ENCODE measurements at regions of chr2 and their contacts with region 1.

Region 1: DNA sequence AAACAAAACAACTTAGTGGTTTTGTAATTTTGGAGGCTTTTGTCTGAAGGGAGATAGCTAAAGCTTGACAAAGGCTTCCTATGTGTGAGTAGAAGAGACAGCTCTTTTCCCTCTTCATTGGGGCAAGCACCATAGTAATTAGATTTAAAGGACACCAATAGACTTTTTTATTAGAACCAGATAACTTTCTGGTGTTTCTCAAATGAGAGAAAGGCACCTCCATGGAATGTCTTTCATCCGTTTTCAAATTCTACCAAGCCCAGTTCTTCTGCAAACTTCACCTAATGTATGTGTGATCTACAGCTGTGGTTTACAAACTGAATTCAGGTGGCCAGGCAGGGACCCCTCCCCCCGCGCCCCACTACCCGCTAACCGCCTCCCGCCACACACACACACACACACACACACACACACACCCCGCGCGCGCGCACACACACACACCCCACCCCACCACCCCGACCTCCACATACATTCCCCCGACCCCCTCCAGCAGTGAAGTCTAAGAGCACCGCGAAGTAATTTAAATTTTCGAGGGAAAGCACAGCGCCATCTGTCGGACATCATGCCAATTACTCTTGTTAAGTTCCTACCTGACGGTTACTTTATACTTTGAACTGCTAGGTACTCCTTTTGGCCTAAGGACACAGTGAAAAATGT is 31.6 kb upstream of the PPP1R1C start:
- DNase-seq: peak in 1 of 2 donors; percentile 28
- ATAC-seq: peak in 1 of 2 donors; percentile 81
- H3K4me3 ChIP-seq: peak overlapping the region; percentile 37 to 51 (median 47)
- H3K27ac ChIP-seq: no peak overlapping the region
- H3K4me1 ChIP-seq: peaks cover 0 to 5% of the 10 kb centered on the region in 2 donors
- H3K27me3 ChIP-seq: no peaks in the 10 kb centered on the region
- CTCF ChIP-seq: peak; percentile 20 to 74 (median 43)
- POLR2A ChIP-seq: no peak

Region 2: DNA sequence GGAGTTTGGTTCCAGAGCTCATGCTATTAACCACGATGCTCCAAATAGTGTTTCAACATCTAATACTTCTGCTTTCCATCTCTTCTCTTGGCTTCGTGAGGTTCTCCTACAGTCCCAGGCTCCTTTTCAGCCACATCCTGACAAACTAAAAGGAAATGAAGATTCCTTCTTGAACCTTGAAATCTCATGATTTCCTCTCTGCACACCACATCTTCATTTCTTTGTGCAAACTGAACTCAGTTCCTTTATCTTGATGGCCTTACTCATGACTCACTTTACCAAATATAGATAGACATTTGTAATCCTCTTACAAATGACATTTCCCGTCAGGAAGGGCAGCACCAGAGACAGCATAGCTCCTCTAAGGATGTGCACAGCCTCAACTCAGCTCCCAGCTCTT is 546.8 kb before region 1 on chr2:
- in situ Hi-C with region 1: no loop called
- intact Hi-C with region 1: no loop called
- DNase-seq: no peak
- ATAC-seq: no peak
- H3K4me3 ChIP-seq: no peak overlapping the region
- H3K27ac ChIP-seq: no peak overlapping the region
- H3K4me1 ChIP-seq: no peaks in the 10 kb centered on the region
- H3K27me3 ChIP-seq: no peaks in the 10 kb centered on the region
- CTCF ChIP-seq: no peak
- POLR2A ChIP-seq: no peak

Region 3: GRCh38 chr2:181774685-181775084 is 179.3 kb before region 1 on chr2:
- in situ Hi-C with region 1: loop called in 1 of 4 experiments (anchors 25 kb)
- intact Hi-C with region 1: no loop called
- DNase-seq: no peak
- ATAC-seq: no peak
- H3K4me3 ChIP-seq: no peak overlapping the region
- H3K27ac ChIP-seq: no peak overlapping the region
- H3K4me1 ChIP-seq: no peaks in the 10 kb centered on the region
- H3K27me3 ChIP-seq: no peaks in the 10 kb centered on the region
- CTCF ChIP-seq: no peak
- POLR2A ChIP-seq: no peak